Panc1 (cell line): ENCODE measurements at regions of chr7 and their contacts with region 1.

Region 1: GRCh38 chr7:47786557-47787248 is 161.6 kb downstream of the PKD1L1 start:
- DNase-seq: peak; percentile 95
- ATAC-seq: peak; percentile 96
- H3K4me3 ChIP-seq: no peak overlapping the region
- H3K27ac ChIP-seq: peak overlapping the region; percentile 100
- H3K4me1 ChIP-seq: peaks cover 56% of the 10 kb centered on the region
- H3K27me3 ChIP-seq: no peaks in the 10 kb centered on the region
- CTCF ChIP-seq: no peak

Region 2: GRCh38 chr7:46695051-46695707 is 1091.5 kb before region 1 on chr7:
- CTCF ChIA-PET with region 1: no interaction called
- POLR2A ChIA-PET with region 1: no interaction called
- in situ Hi-C with region 1: no loop called
- intact Hi-C with region 1: no loop called
- DNase-seq: no peak
- ATAC-seq: no peak
- H3K4me3 ChIP-seq: no peak overlapping the region
- H3K27ac ChIP-seq: no peak overlapping the region
- H3K4me1 ChIP-seq: no peaks in the 10 kb centered on the region
- H3K27me3 ChIP-seq: no peaks in the 10 kb centered on the region
- CTCF ChIP-seq: 0 out of 2 replicates have a peak, but pooled peaks have one; percentile 3

Region 3: DNA sequence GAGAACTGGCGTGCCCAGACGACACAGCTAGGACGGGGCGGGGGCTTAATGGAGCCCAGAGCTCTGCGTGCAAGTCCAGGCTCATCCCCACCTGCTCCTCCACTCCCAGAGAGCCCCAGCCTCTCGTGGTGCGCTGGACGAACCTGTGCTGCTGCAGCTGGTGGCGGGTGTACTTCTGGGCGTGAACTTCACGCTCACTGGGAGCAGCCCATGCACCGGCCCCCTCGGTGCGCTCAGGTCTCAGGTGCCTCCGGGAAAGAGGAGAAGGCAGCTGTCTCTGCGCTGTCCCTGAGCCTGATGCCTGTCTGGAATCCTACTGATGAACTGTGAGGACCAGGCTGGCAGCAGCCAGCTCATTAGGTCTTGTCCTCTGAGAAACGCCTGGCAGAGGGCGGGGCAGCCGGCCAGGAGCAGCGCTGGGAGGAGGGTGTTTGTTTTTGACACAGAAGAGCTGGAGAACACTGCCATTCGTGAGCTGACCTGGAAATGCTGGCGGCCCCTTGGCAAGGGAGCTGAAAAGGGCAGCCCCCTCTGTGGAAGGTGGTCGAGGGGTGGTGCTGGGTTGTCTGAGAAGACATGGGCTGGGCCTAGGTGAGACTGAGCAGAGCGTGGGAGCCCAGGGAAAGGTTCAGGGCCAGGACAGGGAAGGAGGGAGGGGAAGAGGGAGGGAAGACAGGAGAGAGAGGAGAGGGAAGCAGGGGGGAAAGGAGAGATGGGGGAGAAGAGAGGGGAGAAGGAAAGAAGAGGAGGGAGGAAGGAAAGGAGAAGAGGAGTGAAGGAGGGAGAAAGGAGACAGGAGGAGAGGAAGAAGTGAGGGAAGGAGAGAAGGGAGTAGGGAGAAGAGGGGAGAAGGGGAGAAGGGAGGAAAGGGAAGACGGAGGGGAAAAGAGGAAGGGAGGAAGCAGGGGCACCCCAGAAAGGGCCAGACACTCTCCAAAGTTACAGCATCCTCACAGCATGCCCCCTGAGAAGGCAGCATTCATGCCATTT is 151.3 kb before region 1 on chr7:
- CTCF ChIA-PET with region 1: no interaction called
- POLR2A ChIA-PET with region 1: no interaction called
- in situ Hi-C with region 1: no loop called
- intact Hi-C with region 1: loop called (anchors 10 kb)
- DNase-seq: no peak
- ATAC-seq: peak; percentile 81
- H3K4me3 ChIP-seq: peak overlapping the region; percentile 29 to 53
- H3K27ac ChIP-seq: peak overlapping the region; percentile 96
- H3K4me1 ChIP-seq: peaks cover 77% of the 10 kb centered on the region
- H3K27me3 ChIP-seq: no peaks in the 10 kb centered on the region
- CTCF ChIP-seq: no peak

Region 4: GRCh38 chr7:47763063-47763974 is 23.4 kb before region 1 on chr7:
- CTCF ChIA-PET with region 1: interaction called, 5 read pairs
- POLR2A ChIA-PET with region 1: interaction called, 6 read pairs
- in situ Hi-C with region 1: no loop called
- intact Hi-C with region 1: loop called (anchors 1 kb)
- DNase-seq: peak; percentile 96
- ATAC-seq: peak; percentile 91
- H3K4me3 ChIP-seq: peak overlapping the region in 1 of 2 experiments; percentile 15; a peak in 1 of 4 replicates
- H3K27ac ChIP-seq: peak overlapping the region; percentile 100
- H3K4me1 ChIP-seq: peaks cover 38% of the 10 kb centered on the region
- H3K27me3 ChIP-seq: no peaks in the 10 kb centered on the region
- CTCF ChIP-seq: no peak; the same call in 1 of the 2 replicates